ENCODE measurements at regions of chr19 and their contacts with region 1.

Region 1: GRCh38 chr19:44258835-44259413 is 762 bp upstream of the ZNF233 start:
- DNase-seq: no peak
- H3K4me3 ChIP-seq: no peak overlapping the region
- H3K27ac ChIP-seq: no peak overlapping the region
- H3K4me1 ChIP-seq: peaks cover 8% of the 10 kb centered on the region
- H3K27me3 ChIP-seq: no peaks in the 10 kb centered on the region
- CTCF ChIP-seq: no peak

Region 2: DNA sequence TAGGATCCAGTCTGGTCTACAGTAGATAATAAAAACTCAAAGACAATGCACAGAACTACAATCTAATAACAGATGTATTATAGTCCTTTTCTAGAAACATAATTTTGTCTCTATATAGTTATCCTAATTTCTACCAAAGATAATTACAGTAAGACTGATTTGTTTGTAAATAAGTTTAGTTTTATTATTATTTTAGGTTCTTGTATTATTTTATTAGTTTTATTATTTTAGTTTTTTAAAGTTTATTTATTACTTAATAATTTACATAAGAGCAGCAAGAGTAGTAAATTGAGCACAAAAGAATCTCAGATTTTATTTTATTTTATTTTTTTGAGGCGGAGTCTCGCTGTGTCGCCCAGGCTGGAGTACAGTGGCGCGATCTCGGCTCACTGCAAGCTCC is 68.9 kb before region 1 on chr19:
- CTCF ChIA-PET with region 1: no interaction called
- dilution Hi-C with region 1: no loop called
- in situ Hi-C with region 1: no loop called
- intact Hi-C with region 1: no loop called
- DNase-seq: no peak
- H3K4me3 ChIP-seq: no peak overlapping the region
- H3K27ac ChIP-seq: no peak overlapping the region
- H3K4me1 ChIP-seq: no peaks in the 10 kb centered on the region
- H3K27me3 ChIP-seq: no peaks in the 10 kb centered on the region
- CTCF ChIP-seq: no peak

Region 3: GRCh38 chr19:44282846-44283245 is 23.9 kb after region 1 on chr19:
- CTCF ChIA-PET with region 1: no interaction called
- dilution Hi-C with region 1: no loop called
- in situ Hi-C with region 1: no loop called
- intact Hi-C with region 1: loop called (anchors 2 kb)
- DNase-seq: peak; percentile 54
- H3K4me3 ChIP-seq: no peak overlapping the region
- H3K27ac ChIP-seq: no peak overlapping the region
- H3K4me1 ChIP-seq: peaks cover 14% of the 10 kb centered on the region
- H3K27me3 ChIP-seq: no peaks in the 10 kb centered on the region
- CTCF ChIP-seq: no peak

Measured in mammary epithelial cell (primary cell).